Activated T-helper 1 cell treated with anti-CD3 and anti-CD28 coated beads, Interleukin-12 subunit alpha, Interleukin-12 subunit beta, Interleukin-2, Interleukin-4 antibody, amounts not matched to agents 30 ng/mL and 10 ng/mL and 1 ng/mL, durations not matched to agents 14 hours and 24 hours and 36 hours (primary cell): ENCODE measurements at regions of chr12 and their contacts with region 1.

Region 1: DNA sequence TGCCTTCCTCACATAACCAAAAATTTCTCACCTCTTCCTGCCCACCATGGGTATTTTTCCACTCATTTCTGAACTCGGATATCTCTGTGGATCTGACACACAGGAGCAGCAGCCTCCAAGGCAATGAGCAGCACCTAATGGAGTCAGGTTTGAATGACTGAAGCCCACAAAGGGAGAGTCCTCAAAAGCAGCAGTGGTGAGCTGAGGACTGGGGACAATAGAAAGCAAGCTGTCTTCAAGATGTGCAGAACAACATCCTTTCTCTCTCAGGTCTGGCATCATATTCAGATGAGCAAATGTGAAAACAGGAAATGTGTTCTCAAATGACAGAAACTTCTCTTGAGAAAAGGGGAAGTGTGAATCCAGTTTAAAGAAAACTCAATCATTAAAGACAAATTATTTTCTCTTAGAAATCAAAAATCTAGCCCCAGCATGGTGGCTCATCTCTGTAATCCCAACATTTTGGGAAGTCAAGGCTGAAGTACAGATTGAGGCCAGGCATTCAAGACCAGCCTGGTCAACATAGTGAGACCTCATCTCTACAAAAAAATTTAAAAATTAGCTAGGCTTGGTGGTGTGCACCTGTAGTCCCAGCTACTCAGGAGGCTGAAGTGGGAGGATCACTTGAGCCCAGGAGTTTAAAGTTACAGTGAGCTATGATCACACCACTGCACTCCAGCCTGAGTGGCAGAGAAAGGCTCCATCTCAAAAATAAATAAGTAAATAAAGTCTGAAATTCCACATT is 54.2 kb downstream of the C12orf42 start:
- DNase-seq: peak; percentile 57
- H3K4me3 Mint-ChIP-seq: peak overlapping the region; percentile 73
- H3K27ac Mint-ChIP-seq: peak overlapping the region; percentile 89
- H3K4me1 Mint-ChIP-seq: peaks cover 28% of the 10 kb centered on the region
- H3K27me3 Mint-ChIP-seq: no peaks in the 10 kb centered on the region

Region 2: DNA sequence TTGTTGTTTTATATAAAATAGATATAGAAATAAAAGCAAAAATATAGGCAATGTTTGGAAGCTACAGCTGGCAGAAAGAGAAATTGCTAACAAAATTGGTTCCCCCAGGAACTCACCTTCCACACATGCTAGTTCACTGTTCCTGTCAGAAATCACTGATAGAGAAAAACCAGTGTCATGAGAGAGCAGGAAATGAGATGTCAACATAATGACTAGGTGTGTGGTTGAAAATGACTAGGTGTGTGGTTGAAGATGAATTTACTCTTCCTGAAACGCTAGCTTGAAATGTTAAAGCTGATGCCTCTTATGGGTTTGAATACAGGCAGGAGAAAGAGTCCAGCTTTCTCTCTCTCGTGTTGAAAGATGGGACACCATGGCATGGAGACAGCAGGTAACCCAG is 162.2 kb before region 1 on chr12:
- intact Hi-C with region 1: loop called (anchors 2 kb)
- DNase-seq: peak; percentile 17
- H3K4me3 Mint-ChIP-seq: no peak overlapping the region
- H3K27ac Mint-ChIP-seq: peak overlapping the region; percentile 15
- H3K4me1 Mint-ChIP-seq: peaks cover 23% of the 10 kb centered on the region
- H3K27me3 Mint-ChIP-seq: peaks cover 14% of the 10 kb centered on the region

Region 3: DNA sequence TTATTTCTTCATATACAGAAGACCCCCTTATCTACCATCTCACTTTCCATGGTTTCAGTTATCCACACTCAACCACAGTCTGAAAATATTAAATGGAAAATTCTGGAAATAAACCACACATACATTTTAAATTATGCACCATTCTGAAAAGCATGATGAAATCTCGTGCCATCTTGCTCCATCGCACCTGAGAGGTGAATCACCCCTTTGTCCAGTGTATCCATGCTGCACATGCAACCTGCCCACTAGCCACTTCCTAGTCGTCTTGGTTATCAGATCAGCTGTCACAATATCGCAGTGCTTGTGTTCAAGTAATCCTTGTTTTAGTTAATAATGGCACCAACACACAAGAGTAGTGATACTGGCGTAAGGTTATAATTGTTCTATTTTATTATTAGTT is 91.5 kb before region 1 on chr12:
- intact Hi-C with region 1: loop called (anchors 10 kb)
- DNase-seq: no peak
- H3K4me3 Mint-ChIP-seq: no peak overlapping the region
- H3K27ac Mint-ChIP-seq: no peak overlapping the region
- H3K4me1 Mint-ChIP-seq: peaks cover 22% of the 10 kb centered on the region
- H3K27me3 Mint-ChIP-seq: no peaks in the 10 kb centered on the region

Region 4: DNA sequence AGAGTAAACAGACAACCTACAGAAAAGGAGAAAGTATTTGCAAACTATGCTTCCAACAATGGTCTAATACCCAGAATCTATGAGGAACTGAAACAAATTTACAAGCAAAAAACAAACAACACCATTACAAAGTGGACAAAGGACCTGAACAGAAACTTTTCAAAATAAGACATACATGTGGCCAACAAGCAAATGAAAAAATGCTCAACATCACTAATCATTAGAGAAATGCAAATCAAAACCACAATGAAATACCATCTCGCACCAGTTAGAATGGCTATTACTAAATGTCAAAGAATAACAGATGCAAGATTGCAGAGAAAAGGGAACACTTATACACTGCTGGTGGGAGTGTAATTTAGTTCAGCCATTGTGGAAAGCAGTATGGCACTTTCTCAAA is 71.7 kb before region 1 on chr12:
- intact Hi-C with region 1: no loop called
- DNase-seq: no peak
- H3K4me3 Mint-ChIP-seq: no peak overlapping the region
- H3K27ac Mint-ChIP-seq: no peak overlapping the region
- H3K4me1 Mint-ChIP-seq: peaks cover 4% of the 10 kb centered on the region
- H3K27me3 Mint-ChIP-seq: no peaks in the 10 kb centered on the region

Region 5: DNA sequence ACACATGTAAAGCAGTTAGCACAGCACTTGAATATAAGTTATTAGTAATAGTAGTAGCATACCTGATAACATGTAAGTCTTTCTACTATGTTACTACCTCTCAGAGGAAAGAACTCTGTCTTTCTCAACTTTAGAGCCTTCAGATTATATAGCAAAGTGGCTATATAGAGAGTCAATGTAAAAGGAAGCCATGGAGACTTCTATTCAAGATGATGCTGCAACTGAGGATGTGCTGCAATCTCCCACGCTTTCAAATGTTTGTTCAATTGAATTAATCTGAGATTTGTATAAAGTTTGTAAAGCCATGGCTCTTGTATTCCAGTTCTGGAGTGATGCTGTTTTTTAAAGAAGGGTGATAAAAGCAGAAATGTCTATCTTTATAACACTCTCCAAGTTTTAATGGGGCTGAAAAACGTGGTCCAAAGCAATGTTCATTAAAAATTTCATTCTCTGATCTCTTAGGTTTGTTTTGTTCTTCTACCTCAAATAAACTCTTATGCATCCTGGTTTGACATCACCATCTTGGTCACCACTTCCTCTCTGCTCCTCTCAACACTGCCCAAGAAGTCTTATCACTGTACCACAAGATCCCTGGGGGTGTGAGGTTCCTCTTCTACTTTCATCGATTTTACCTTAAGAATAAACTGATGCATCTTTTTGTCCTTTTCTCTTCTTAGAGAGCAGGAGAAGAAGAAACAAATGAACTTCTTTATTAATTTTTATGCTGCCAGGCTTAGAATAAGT is 13.6 kb after region 1 on chr12:
- intact Hi-C with region 1: loop called (anchors 2 kb)
- DNase-seq: peak; percentile 16
- H3K4me3 Mint-ChIP-seq: peak overlapping the region; percentile 2
- H3K27ac Mint-ChIP-seq: peak overlapping the region; percentile 13
- H3K4me1 Mint-ChIP-seq: peaks cover 63% of the 10 kb centered on the region
- H3K27me3 Mint-ChIP-seq: peaks cover 5% of the 10 kb centered on the region

Region 6: GRCh38 chr12:103523771-103524170 is 82.2 kb after region 1 on chr12:
- intact Hi-C with region 1: no loop called
- DNase-seq: no peak
- H3K4me3 Mint-ChIP-seq: no peak overlapping the region
- H3K27ac Mint-ChIP-seq: no peak overlapping the region
- H3K4me1 Mint-ChIP-seq: no peaks in the 10 kb centered on the region
- H3K27me3 Mint-ChIP-seq: peaks cover 3% of the 10 kb centered on the region

Region 7: GRCh38 chr12:103728323-103728722 is 286.7 kb after region 1 on chr12:
- intact Hi-C with region 1: no loop called
- DNase-seq: no peak
- H3K4me3 Mint-ChIP-seq: no peak overlapping the region
- H3K27ac Mint-ChIP-seq: no peak overlapping the region
- H3K4me1 Mint-ChIP-seq: no peaks in the 10 kb centered on the region
- H3K27me3 Mint-ChIP-seq: peaks cover 3% of the 10 kb centered on the region